ENCODE measurements at regions of chr9 and their contacts with region 1.

Region 1: DNA sequence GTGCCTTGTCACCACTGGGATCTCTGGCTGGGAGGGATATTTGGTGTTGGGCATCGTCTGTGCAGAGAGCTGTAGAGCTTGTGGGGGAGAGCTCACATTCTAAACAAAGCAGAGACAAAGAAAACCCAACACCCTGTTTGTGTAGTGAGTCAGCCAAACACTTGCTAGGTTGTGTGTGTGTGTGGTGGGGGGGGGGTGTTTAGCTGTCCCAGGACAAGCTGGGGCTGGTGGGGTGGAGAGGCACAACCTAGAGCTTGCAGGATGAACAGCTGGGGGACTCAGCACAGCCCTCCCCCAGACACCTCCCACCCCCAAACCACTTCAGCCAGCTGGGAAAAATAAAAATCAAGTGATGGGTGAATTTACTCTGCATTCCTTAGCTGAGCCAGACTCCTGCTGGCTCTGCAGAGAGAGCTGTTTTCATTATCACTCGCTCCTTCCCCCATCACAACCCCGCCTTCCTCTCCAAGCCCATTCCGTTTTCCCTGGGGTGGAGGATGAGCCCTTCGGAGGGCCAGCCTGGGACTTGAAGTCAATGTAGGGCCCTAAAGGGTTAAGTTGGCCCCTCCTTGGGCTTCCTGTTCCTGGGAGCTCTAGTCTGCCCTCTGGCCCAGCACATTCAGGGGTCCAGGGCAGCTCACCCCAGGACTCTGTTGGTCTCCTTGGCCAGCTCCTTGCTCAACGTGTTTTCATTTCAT is 2.6 kb downstream of the OLFML2A start:
- DNase-seq: no peak
- ATAC-seq: peak; percentile 83
- H3K4me3 ChIP-seq: peak overlapping the region in 1 of 2 experiments; percentile 15; a peak in 2 of 4 replicates
- H3K27ac ChIP-seq: peak overlapping the region; percentile 77
- H3K4me1 ChIP-seq: peaks cover 38% of the 10 kb centered on the region
- H3K27me3 ChIP-seq: no peaks in the 10 kb centered on the region
- CTCF ChIP-seq: no peak

Region 2: GRCh38 chr9:124602204-124602603 is 177.3 kb before region 1 on chr9:
- CTCF ChIA-PET with region 1: no interaction called
- POLR2A ChIA-PET with region 1: no interaction called
- in situ Hi-C with region 1: no loop called
- intact Hi-C with region 1: no loop called
- DNase-seq: no peak
- ATAC-seq: no peak
- H3K4me3 ChIP-seq: no peak overlapping the region
- H3K27ac ChIP-seq: no peak overlapping the region
- H3K4me1 ChIP-seq: no peaks in the 10 kb centered on the region
- H3K27me3 ChIP-seq: no peaks in the 10 kb centered on the region
- CTCF ChIP-seq: no peak

Region 3: DNA sequence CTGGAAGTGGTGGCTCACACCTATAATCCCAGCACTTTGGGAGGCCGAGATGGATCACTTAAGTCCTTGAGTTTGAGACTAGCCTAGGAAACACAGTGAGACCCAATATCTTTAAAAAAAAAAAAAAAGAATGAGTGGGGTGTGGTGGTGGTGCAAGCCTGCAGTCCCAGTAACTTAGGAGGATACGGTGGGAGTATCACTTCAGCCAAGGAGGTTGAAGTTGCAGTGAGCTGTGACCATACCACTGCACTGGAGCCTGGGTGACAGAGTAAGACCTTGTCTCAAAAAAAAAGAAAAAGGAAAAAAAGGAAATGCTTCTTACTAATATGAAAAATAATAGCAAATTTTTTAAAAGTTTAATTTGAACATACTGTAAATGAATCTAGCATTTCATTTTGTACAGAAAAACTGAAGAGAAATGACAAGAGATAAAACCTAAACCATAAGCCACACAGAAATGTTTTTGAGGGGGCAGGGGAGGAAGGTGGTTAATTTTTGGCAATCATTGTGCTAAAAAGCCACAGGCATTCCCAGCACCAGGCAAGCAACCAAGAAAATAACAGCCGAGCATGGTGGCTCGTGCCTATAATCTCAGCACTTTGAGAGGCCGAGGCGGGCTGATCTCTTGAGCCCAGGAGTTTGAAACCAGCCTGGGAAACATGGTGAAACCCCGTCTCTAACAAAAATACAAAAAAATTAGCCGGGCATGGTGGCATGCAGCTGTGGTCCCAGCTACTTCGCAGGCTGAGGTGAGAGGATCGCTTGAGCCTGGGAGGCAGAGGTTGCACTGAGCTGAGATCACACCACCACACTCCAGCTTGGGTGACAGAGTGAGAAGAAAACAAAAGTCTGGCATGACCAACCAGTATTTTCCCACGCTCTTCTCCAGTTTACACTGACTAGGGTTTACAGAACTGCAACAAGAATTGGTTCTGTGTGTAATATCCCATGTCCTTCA is 157.9 kb before region 1 on chr9:
- CTCF ChIA-PET with region 1: no interaction called
- POLR2A ChIA-PET with region 1: no interaction called
- in situ Hi-C with region 1: no loop called
- intact Hi-C with region 1: no loop called
- DNase-seq: no peak
- ATAC-seq: peak; percentile 56; the same call in 1 of the 2 replicates
- H3K4me3 ChIP-seq: no peak overlapping the region
- H3K27ac ChIP-seq: peak overlapping the region; percentile 53; the same call in 1 of the 2 replicates
- H3K4me1 ChIP-seq: peaks cover 42% of the 10 kb centered on the region
- H3K27me3 ChIP-seq: no peaks in the 10 kb centered on the region
- CTCF ChIP-seq: no peak

Region 4: DNA sequence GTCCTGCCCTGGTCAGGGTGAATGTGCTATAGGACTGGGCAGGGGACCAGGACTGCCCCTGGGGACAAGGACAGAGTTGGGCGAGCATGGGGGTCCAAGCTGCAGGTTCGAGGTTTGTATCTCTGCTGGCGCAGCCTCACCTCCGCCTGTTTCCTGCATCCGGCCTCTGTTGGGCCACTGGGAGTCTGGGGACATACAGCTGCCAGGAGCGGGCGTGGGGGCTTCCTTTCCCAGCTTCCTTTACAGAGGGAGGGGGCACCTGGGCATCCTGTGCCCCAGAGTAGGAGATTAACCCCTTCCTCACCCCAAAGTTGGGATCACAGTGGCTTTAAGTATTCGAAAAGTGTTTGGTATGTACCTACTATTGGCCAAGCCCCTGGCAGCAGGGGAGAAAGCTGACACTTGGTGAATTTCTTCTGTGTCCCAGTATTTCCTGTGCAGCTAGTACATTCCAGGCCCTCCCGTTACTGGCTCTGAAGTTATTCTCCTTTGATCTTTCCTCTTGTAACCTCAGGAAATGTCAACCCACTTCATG is 16.4 kb after region 1 on chr9:
- CTCF ChIA-PET with region 1: interaction called, 3 read pairs
- POLR2A ChIA-PET with region 1: interaction called, 10 read pairs
- in situ Hi-C with region 1: no loop called
- intact Hi-C with region 1: no loop called
- DNase-seq: no peak
- ATAC-seq: no peak
- H3K4me3 ChIP-seq: no peak overlapping the region
- H3K27ac ChIP-seq: no peak overlapping the region
- H3K4me1 ChIP-seq: no peaks in the 10 kb centered on the region
- H3K27me3 ChIP-seq: no peaks in the 10 kb centered on the region
- CTCF ChIP-seq: no peak